Naive thymus-derived CD4-positive, alpha-beta T cell (primary cell): ENCODE measurements at regions of chr11 and their contacts with region 1.

Region 1: DNA sequence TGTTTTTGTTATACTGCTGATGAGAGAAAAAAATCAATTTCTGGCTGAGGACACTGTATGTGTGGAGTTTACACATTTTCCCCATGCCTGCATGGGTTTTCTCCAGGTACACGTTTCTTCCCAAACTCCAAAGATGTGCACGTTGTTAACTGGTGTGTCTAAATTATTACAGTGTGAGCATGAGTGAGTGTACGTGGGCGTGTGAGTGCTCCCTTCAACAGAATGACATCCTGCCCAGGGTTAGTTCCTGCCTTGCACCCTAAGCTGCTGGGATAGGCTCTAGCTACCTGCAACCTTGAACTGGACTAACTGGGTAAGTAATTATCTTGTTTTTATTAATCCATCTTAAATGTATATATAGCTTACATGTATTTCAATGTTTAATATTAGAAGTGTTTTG is 5.5 kb downstream of the NPAT start:
- DNase-seq: peak in 1 of 9 donors; percentile 18
- ATAC-seq: peak; percentile 44
- H3K4me3 ChIP-seq: peak overlapping the region; percentile 14
- H3K4me3 Mint-ChIP-seq: peak overlapping the region; percentile 17 to 77 (median 66)
- H3K27ac ChIP-seq: peak overlapping the region; percentile 24
- H3K27ac Mint-ChIP-seq: peak overlapping the region in 7 of 9 donors; percentile 13 to 85 (median 77)
- H3K4me1 ChIP-seq: peaks cover 34 to 49% of the 10 kb centered on the region in 2 donors
- H3K4me1 Mint-ChIP-seq: peaks cover 50 to 87% (median 83%) of the 10 kb centered on the region in 7 donors
- H3K27me3 ChIP-seq: no peaks in the 10 kb centered on the region
- H3K27me3 Mint-ChIP-seq: no peaks in the 10 kb centered on the region

Region 2: DNA sequence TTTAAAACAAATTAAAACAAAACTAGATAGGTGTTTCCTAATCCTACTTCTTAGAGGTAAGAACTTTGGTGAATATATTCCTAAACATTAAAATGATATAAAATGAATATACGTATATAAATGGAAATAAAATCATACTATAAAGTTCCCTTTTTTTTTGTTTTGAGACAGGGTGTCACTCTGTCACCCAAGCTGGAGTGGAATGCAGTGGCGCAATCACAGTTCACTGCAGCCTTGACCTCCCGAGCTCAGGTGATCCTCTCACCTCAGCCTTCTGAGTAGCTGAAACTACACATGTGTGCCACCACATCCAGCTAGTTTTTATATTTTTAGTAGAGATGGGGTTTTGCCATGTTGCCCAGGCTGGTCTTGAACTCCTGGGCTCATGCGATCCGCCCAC is 39.4 kb before region 1 on chr11:
- CTCF ChIA-PET with region 1: no interaction called
- POLR2A ChIA-PET with region 1: interaction called, 4 read pairs
- intact Hi-C with region 1: loop called in 1 of 2 experiments (anchors 5 kb)
- DNase-seq: no peak
- ATAC-seq: no peak
- H3K4me3 ChIP-seq: no peak overlapping the region
- H3K4me3 Mint-ChIP-seq: no peak overlapping the region
- H3K27ac ChIP-seq: no peak overlapping the region
- H3K27ac Mint-ChIP-seq: peak overlapping the region in 5 of 9 donors; percentile 0 to 80 (median 31)
- H3K4me1 ChIP-seq: no peaks in the 10 kb centered on the region
- H3K4me1 Mint-ChIP-seq: peaks cover 0 to 23% (median 12%) of the 10 kb centered on the region in 7 donors
- H3K27me3 ChIP-seq: no peaks in the 10 kb centered on the region
- H3K27me3 Mint-ChIP-seq: no peaks in the 10 kb centered on the region

Region 3: DNA sequence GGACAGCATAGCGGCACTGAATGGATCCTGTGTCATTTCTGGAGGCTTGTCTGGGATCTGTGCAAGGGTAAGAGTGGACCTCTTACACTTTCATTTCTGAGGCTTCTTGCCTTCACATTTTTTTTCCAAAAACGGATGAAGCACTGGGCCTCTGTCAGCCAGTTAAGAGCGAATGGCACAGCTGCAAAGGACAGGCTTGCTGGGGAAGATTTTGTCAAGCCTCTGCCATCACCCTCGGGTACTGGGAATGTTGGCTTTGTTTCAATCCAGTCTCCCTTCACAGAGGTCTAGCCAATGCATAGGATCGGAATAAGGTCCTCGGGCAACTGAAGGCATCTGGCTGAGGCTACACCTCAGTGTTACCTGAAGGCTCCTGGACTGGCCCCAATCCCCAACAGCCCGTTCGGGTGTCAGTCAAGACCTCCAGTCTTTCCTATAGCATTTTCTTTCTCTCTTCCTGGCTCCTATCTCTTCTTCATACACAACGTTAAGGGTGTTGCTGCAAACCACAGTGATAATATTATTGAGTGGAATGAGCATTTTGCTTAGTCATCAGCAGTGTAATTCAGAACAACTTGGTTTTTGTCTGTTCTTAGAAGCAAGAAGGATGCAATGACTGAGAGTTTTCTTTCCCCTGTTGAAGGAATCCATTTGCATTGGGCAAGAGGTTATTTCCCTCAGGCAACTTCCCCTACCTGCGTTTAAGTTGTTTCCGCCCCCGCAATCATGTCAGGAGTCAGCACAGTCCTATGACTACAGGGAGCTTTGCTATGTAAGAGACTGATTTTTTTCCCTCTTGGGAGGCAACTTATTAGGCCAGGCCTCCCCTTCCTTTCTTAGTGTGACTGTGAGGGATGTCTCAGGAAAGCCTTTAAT is 17.3 kb before region 1 on chr11:
- CTCF ChIA-PET with region 1: no interaction called
- POLR2A ChIA-PET with region 1: interaction called, 5 read pairs
- intact Hi-C with region 1: loop called (anchors 1 to 2 kb)
- DNase-seq: peak in 3 of 9 donors; percentile 8 to 59 (median 46)
- ATAC-seq: peak; percentile 85
- H3K4me3 ChIP-seq: no peak overlapping the region
- H3K4me3 Mint-ChIP-seq: peak overlapping the region in 6 of 10 donors; percentile 10 to 55 (median 42)
- H3K27ac ChIP-seq: peak overlapping the region; percentile 31
- H3K27ac Mint-ChIP-seq: peak overlapping the region in 8 of 9 donors; percentile 7 to 86 (median 69)
- H3K4me1 ChIP-seq: peaks cover 0 to 40% of the 10 kb centered on the region in 2 donors
- H3K4me1 Mint-ChIP-seq: peaks cover 31 to 89% (median 81%) of the 10 kb centered on the region in 7 donors
- H3K27me3 ChIP-seq: no peaks in the 10 kb centered on the region
- H3K27me3 Mint-ChIP-seq: no peaks in the 10 kb centered on the region

Region 4: GRCh38 chr11:108237058-108237481 is 20.1 kb after region 1 on chr11:
- CTCF ChIA-PET with region 1: interaction called, 104 read pairs
- POLR2A ChIA-PET with region 1: interaction called, 779 read pairs
- intact Hi-C with region 1: no loop called
- DNase-seq: peak in 4 of 9 donors; percentile 31 to 63 (median 50)
- ATAC-seq: peak; percentile 51
- H3K4me3 ChIP-seq: peak overlapping the region; percentile 50
- H3K4me3 Mint-ChIP-seq: peak overlapping the region in 9 of 10 donors; percentile 54 to 89 (median 82)
- H3K27ac ChIP-seq: peak overlapping the region; percentile 74
- H3K27ac Mint-ChIP-seq: peak overlapping the region in 7 of 9 donors; percentile 81 to 97 (median 95)
- H3K4me1 ChIP-seq: peaks cover 75 to 94% of the 10 kb centered on the region in 2 donors
- H3K4me1 Mint-ChIP-seq: peaks cover 53 to 95% (median 79%) of the 10 kb centered on the region in 7 donors
- H3K27me3 ChIP-seq: no peaks in the 10 kb centered on the region
- H3K27me3 Mint-ChIP-seq: no peaks in the 10 kb centered on the region

Region 5: GRCh38 chr11:108958368-108959104 is 741.5 kb after region 1 on chr11:
- CTCF ChIA-PET with region 1: no interaction called
- POLR2A ChIA-PET with region 1: no interaction called
- intact Hi-C with region 1: no loop called
- DNase-seq: no peak
- ATAC-seq: no peak
- H3K4me3 ChIP-seq: no peak overlapping the region
- H3K4me3 Mint-ChIP-seq: no peak overlapping the region
- H3K27ac ChIP-seq: no peak overlapping the region
- H3K27ac Mint-ChIP-seq: no peak overlapping the region
- H3K4me1 ChIP-seq: no peaks in the 10 kb centered on the region
- H3K4me1 Mint-ChIP-seq: peaks cover 0 to 10% (median 0%) of the 10 kb centered on the region in 7 donors
- H3K27me3 ChIP-seq: no peaks in the 10 kb centered on the region
- H3K27me3 Mint-ChIP-seq: peaks cover 0 to 8% (median 0%) of the 10 kb centered on the region in 5 donors